Prostate gland (tissue), 2 donors: ENCODE measurements at regions of chr4 and their contacts with region 1.

Region 1: GRCh38 chr4:109424093-109424841 is 9.3 kb upstream of the SEC24B start:
- DNase-seq: no peak
- H3K4me3 ChIP-seq: no peak overlapping the region
- H3K27ac ChIP-seq: no peak overlapping the region
- H3K4me1 ChIP-seq: no peaks in the 10 kb centered on the region
- H3K27me3 ChIP-seq: no peaks in the 10 kb centered on the region
- CTCF ChIP-seq: no peak
- POLR2A ChIP-seq: no peak

Region 2: GRCh38 chr4:109690690-109691410 is 266.6 kb after region 1 on chr4:
- intact Hi-C with region 1: no loop called
- DNase-seq: no peak
- H3K4me3 ChIP-seq: no peak overlapping the region
- H3K27ac ChIP-seq: no peak overlapping the region
- H3K4me1 ChIP-seq: no peaks in the 10 kb centered on the region
- H3K27me3 ChIP-seq: no peaks in the 10 kb centered on the region
- CTCF ChIP-seq: no peak
- POLR2A ChIP-seq: no peak

Region 3: DNA sequence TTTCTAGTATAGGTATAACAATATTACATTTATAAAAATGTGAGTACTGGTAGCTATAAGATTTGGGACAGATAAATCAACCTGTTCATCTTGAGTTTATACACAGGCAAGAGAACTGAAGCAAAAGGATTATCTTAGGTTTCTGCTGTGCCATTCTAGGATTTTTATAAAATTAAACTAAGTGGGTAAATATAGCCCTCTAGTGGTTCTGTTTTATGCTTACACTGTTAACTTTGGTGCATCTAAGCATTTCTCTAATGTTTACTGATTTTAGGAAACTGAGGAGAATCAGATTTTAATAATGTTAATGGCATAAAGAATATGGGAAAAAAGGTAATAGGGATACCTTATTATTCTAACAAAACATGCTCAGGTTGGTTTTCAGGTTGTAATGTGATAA is 402.5 kb after region 1 on chr4:
- intact Hi-C with region 1: loop called (anchors 2 kb)
- DNase-seq: no peak
- H3K4me3 ChIP-seq: no peak overlapping the region
- H3K27ac ChIP-seq: no peak overlapping the region
- H3K4me1 ChIP-seq: no peaks in the 10 kb centered on the region
- H3K27me3 ChIP-seq: no peaks in the 10 kb centered on the region
- CTCF ChIP-seq: peak in 3 of 4 experiments; percentile 28 to 60 (median 57)
- POLR2A ChIP-seq: no peak

Region 4: GRCh38 chr4:109977854-109978501 is 553.7 kb after region 1 on chr4:
- intact Hi-C with region 1: loop called (anchors 5 kb)
- DNase-seq: no peak
- H3K4me3 ChIP-seq: no peak overlapping the region
- H3K27ac ChIP-seq: no peak overlapping the region
- H3K4me1 ChIP-seq: no peaks in the 10 kb centered on the region
- H3K27me3 ChIP-seq: no peaks in the 10 kb centered on the region
- CTCF ChIP-seq: peak; percentile 22 to 69 (median 54)
- POLR2A ChIP-seq: no peak